ENCODE measurements at regions of chr1 and their contacts with region 1.

Region 1: DNA sequence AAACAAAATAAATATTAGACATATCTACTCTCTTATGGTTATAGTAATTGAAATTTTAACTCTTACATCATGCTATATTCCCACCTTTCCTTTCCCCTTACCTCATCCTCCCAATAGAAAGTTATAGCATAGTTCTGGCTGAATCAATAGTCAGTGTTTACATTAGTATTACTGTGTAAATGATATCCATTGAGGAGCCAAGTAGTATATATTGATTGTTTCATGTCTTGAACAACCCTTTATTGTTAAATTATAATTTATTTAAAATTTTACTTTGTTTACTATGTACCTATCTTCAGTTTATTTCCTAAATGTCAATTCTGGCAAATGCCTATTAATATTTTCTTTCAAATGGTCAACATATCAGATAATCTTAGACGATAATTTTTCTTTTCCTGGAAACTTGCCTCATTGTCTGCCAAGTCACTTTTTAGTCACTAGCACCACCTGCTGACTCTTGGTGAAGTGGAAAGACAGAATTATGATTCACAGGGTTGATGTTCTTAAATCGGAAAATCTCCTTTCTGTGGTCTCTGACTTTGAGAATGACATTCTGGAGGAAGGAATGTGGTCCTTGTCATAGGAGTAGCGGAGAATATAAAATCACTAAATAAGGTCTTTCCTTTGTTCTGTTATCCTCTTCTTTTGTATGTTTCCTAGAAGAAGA is 8.7 kb downstream of the HJV start:
- DNase-seq: peak in 1 of 6 donors; percentile 54
- ATAC-seq: peak; percentile 77 to 91 (median 86)
- H3K4me3 ChIP-seq: no peak overlapping the region
- H3K27ac ChIP-seq: no peak overlapping the region
- H3K4me1 ChIP-seq: peaks cover 0 to 9% (median 0%) of the 10 kb centered on the region in 3 donors
- H3K27me3 ChIP-seq: no peaks in the 10 kb centered on the region
- CTCF ChIP-seq: peak in 3 of 4 donors; percentile 36 to 60 (median 51)

Region 2: GRCh38 chr1:145845514-145846161 is 167.2 kb before region 1 on chr1 and contains the start of gene NUDT17:
- intact Hi-C with region 1: loop called in 2 of 3 experiments (anchors 5 kb)
- DNase-seq: peak; percentile 63 to 92 (median 80)
- ATAC-seq: peak; percentile 88 to 96 (median 92)
- H3K4me3 ChIP-seq: peak within 1 kb of the TSS; percentile 31 to 72 (median 42)
- H3K27ac ChIP-seq: peak within 1 kb of the TSS; percentile 7 to 55 (median 34)
- H3K4me1 ChIP-seq: peaks cover 0 to 6% (median 4%) of the 10 kb centered on the region in 3 donors
- H3K27me3 ChIP-seq: no peaks in the 10 kb centered on the region
- CTCF ChIP-seq: peak; percentile 85 to 91 (median 87)
- total RNA-seq, gene NUDT17: 1.0 to 2.6 (median 1.7) TPM

Region 3: GRCh38 chr1:145891587-145892485 is 121.0 kb before region 1 on chr1:
- intact Hi-C with region 1: loop called in 1 of 3 experiments (anchors 10 kb)
- DNase-seq: peak; percentile 92 to 98 (median 95)
- ATAC-seq: peak; percentile 94 to 96 (median 95)
- H3K4me3 ChIP-seq: peak overlapping the region in 1 of 4 donors; percentile 3
- H3K27ac ChIP-seq: peak overlapping the region; percentile 60 to 80 (median 70)
- H3K4me1 ChIP-seq: peaks cover 17 to 27% (median 21%) of the 10 kb centered on the region in 3 donors
- H3K27me3 ChIP-seq: no peaks in the 10 kb centered on the region
- CTCF ChIP-seq: peak; percentile 88 to 94 (median 92)

Region 4: DNA sequence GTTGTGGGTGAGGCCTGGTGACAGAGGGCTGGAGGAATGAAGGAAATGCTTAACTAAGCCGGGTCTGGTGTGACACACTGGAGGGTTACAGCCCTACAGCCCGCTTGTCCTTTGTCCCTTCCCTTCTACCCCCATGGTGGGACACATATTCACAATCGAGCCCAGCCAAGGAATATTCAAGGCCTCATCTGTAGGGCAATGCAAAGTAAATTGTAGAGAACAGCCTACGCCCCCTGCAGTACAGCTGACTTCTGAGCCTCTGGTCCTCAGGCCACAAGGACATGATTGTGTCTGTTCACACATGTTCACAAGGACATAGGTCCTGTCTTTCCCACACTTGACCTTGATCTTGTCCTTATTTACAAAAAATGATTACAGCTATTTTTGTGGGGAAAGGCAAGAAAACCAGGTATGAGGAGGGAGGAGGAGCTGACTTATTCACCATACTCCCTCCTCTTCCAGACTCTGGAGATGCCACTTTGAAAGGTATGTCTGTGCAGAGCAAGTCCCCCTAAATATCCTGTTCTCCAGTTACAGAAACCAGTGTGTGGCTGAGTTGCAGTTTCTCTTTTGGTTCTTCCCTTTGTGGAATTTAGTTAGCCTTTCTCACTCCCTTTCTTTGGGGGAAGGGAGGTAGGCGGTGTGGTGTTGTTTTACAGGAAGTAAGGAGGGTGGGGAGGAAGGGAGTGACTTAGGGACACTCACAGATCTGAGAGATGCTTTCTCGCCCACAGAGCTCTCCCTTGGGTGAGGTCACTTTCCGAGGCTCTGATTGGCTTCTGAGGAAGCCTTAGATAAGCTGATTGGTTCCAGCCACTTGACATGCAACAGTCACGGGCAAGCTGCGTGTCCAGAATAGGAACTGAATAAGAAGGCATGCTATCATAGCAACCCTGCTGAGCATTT is 33.8 kb before region 1 on chr1:
- intact Hi-C with region 1: loop called in 2 of 3 experiments (anchors 2 to 5 kb)
- DNase-seq: peak in 4 of 6 donors; percentile 77 to 87 (median 82)
- ATAC-seq: peak; percentile 73 to 87 (median 82)
- H3K4me3 ChIP-seq: peak overlapping the region in 2 of 4 donors; percentile 12 to 17
- H3K27ac ChIP-seq: peak overlapping the region; percentile 69 to 92 (median 82)
- H3K4me1 ChIP-seq: peaks cover 42 to 59% (median 50%) of the 10 kb centered on the region in 3 donors
- H3K27me3 ChIP-seq: no peaks in the 10 kb centered on the region
- CTCF ChIP-seq: no peak

Measured in pancreas (tissue), 10 donors.